Right lobe of liver (tissue), 6 donors: ENCODE measurements at regions of chr4 and their contacts with region 1.

Region 1: DNA sequence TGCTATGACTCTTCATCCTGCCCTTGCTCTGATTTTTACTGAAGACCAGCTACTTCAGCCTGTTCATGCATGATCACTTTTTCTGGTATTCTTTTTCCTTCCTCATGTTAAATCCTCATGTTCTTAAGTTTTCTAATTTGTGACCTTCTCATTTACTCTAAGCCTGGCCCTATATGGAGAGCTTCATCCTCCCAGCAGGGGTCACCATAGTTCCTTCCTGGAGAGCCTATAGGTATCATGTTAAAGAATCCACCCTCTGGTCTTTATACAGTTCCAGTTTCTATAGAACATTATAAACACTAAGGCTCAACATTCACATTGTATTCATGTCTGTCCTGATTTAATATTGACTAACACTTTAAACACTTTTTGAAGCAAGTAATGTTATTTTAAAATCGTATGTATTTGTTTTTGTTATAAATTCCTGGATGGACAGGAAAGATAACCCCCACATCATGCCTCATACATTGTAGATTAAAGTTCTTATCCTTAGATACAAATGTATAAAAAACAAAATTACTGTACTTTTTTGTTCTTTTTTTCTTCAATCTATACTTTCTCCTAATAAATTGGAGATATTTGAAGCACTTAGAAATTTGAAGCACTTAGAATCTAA is 53.8 kb upstream of the OTUD4 start:
- DNase-seq: peak in 2 of 3 donors; percentile 30 to 50
- ATAC-seq: peak; percentile 83 to 92 (median 88)
- H3K4me3 ChIP-seq: no peak overlapping the region
- H3K27ac ChIP-seq: no peak overlapping the region
- H3K4me1 ChIP-seq: no peaks in the 10 kb centered on the region
- H3K27me3 ChIP-seq: no peaks in the 10 kb centered on the region
- CTCF ChIP-seq: peak; percentile 76 to 86 (median 81)
- POLR2A ChIP-seq: no peak

Region 2: DNA sequence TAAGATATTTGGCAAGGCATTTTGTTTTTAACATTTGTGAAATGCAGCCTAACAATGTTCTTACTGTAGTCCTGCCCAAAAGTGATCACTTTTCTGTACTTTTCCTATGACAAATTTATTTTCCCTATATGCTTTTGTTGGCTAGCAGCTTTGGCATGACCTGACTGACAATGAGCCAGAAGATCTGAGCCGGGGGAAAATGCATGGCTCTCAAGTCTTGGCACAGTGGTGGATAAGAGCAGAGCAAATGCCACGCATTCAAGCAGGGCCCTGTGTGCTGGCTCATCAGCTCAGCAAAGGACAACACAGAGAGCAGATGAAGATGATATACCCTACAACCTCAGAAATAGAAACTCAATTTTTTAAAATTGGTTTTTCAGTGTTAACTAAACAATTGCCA is 323.5 kb before region 1 on chr4:
- intact Hi-C with region 1: no loop called
- DNase-seq: no peak
- ATAC-seq: no peak
- H3K4me3 ChIP-seq: no peak overlapping the region
- H3K27ac ChIP-seq: no peak overlapping the region
- H3K4me1 ChIP-seq: no peaks in the 10 kb centered on the region
- H3K27me3 ChIP-seq: no peaks in the 10 kb centered on the region
- CTCF ChIP-seq: no peak
- POLR2A ChIP-seq: no peak

Region 3: DNA sequence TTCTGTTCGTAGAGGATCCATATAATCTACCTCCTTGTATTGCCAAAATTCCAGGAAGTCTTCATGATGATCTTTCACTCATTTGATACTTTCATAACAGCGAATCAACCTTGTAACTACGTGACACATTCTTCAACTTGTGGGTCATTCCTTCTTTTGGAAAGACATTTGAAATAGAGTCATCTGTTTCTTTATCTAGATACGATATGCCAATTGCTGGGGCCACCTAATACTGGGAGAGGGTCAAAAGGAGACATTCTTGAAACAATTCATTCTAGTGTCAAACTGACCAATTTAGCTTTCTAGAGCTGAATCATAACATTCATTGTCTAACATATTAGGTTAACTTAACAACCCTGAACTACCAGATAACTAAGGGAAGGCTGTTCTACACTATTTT is 184.5 kb after region 1 on chr4:
- intact Hi-C with region 1: no loop called
- DNase-seq: no peak
- ATAC-seq: no peak
- H3K4me3 ChIP-seq: no peak overlapping the region
- H3K27ac ChIP-seq: no peak overlapping the region
- H3K4me1 ChIP-seq: peaks cover 0 to 49% (median 7%) of the 10 kb centered on the region in 4 donors
- H3K27me3 ChIP-seq: no peaks in the 10 kb centered on the region
- CTCF ChIP-seq: no peak
- POLR2A ChIP-seq: no peak

Region 4: DNA sequence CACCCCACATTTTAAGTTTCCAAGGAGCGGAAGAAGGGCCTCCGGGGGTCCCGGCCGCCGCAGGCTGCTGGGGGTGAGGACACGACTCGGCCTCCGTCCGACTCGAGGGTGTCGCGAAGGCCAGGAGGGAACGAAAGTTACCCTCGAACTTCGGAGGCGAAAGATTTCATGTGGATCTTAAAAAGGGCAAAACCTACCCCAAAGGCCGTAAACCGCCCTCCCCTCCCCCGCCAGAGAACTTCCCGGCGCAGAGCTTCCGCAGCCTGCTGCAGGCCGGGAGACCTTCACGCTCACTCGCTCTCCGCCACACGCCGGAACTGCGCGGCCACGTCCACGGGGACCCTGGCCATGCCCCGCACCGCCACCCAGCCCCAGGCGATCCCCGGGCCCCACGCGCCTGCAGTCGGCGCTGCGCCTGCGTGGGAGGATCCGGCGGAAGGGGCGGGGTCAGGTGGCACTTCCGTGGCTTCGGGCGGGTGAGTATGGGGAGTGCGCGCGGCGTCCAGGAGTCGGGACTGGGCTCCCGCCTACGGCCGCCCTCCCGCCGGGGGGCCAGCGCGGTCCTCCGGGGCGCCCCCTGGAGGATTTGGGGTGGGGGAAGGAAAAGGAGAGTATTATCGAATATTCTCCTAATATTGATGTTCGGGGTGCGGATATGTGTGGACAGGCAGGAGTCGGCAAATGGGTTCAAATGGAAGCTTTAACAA is 384.9 kb after region 1 on chr4 and contains the start of gene MMAA:
- intact Hi-C with region 1: loop called in 1 of 2 experiments (anchors 10 kb)
- DNase-seq: peak; percentile 96 to 97 (median 96)
- ATAC-seq: peak; percentile 95 to 99 (median 96)
- H3K4me3 ChIP-seq: peak within 1 kb of the TSS; percentile 72 to 75 (median 73)
- H3K27ac ChIP-seq: peak within 1 kb of the TSS; percentile 94 to 97 (median 95)
- H3K4me1 ChIP-seq: peaks cover 0 to 17% (median 3%) of the 10 kb centered on the region in 4 donors
- H3K27me3 ChIP-seq: no peaks in the 10 kb centered on the region
- CTCF ChIP-seq: peak; percentile 47 to 58 (median 52)
- POLR2A ChIP-seq: peak; percentile 99
- total RNA-seq, gene MMAA: 11.4 to 27.1 (median 20.7) TPM